ENCODE measurements at regions of chrX and their contacts with region 1.

Region 1: DNA sequence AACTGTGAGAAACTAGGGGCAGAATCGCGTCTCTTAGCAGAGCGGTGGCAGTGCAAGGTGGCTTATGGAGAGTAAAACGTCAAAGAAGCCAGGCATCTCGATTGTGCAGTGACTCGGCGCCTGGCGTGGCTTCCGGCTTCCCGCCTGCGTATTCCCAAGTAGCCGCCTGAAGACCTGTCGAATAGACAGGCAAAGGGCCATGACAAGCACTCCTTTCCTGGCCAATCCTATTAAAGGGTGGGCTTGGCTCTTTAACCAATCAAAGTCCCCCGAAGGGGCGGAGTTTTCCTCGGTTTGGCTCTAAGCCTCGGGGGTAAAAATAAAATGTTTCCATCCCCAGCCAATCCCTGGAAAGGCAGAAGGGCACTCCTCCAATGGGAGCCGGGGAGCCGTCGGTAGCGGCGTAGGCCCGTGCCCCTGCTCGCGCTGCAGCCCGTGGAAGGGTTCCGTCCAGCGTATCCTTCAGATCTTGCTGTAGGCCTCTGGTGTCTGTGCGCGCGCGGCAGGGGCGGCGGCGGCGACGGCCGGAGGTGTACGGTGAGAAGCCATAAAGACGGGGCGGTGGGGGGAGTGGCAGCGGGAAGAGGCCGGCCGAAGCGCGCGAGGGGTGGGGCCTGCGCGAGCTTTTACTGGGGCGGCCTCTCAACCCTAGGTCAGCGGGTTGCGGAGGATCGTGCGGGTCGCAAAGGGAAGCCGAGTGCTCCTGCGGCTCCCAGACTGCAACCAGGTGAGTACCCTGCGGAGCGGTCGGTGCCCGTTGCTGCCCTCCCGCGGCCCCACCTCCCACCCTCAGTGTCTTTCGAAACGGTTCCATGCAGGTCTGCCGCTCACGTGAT is at the start of gene KANTR:
- H3K4me3 Mint-ChIP-seq: peak within 1 kb of the TSS; percentile 91
- H3K27ac Mint-ChIP-seq: peak within 1 kb of the TSS; percentile 94
- H3K4me1 Mint-ChIP-seq: peaks cover 10% of the 10 kb centered on the region
- H3K27me3 Mint-ChIP-seq: peaks cover under 1% of the 10 kb centered on the region

Region 2: GRCh38 chrX:52934707-52935469 is 159.1 kb before region 1 on chrX:
- intact Hi-C with region 1: no loop called
- H3K4me3 Mint-ChIP-seq: peak overlapping the region; percentile 95
- H3K27ac Mint-ChIP-seq: peak overlapping the region; percentile 99
- H3K4me1 Mint-ChIP-seq: peaks cover 5% of the 10 kb centered on the region
- H3K27me3 Mint-ChIP-seq: no peaks in the 10 kb centered on the region

Region 3: DNA sequence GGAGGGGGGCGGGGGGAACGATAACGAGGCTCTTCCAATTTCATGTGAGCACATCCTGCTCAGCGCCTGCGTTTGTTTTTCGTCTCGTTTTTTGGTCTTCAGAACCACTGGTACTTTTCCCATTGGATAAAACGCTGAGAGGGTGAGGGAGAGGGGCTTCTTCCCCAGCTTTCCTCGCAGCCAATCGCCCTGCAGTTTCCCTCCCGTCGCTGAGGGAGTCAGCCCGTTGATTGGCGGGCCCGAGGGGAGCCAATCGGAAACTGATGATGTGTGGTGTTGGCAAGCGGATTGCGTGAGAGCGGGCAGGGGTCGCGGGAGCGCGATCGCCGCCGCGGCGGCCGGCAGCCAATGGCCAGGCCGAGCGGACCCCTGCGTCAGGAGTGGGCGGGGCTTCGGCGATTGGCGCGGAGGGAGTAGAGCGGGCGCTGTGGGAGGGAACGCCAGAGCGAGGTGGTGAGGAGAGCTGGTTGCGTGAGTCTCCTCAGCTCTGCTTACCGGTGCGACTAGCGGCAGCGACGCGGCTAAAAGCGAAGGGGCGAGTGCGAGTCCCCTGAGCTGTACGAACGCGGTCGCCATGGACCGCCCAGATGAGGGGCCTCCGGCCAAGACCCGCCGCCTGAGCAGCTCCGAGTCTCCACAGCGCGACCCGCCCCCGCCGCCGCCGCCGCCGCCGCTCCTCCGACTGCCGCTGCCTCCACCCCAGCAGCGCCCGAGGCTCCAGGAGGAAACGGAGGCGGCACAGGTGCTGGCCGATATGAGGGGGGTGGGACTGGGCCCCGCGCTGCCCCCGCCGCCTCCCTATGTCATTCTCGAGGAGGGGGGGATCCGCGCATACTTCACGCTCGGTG is 11.8 kb before region 1 on chrX and contains the start of gene TSPYL2:
- intact Hi-C with region 1: loop called (anchors 1 kb)
- H3K4me3 Mint-ChIP-seq: peak within 1 kb of the TSS; percentile 88
- H3K27ac Mint-ChIP-seq: peak within 1 kb of the TSS; percentile 94
- H3K4me1 Mint-ChIP-seq: peaks cover 13% of the 10 kb centered on the region
- H3K27me3 Mint-ChIP-seq: peaks cover 11% of the 10 kb centered on the region

Measured in dendritic cell treated with granulocyte-macrophage colony-stimulating factor and Interleukin-4, amounts not matched to agents 40 ng/mL and 50 ng/mL, for 4 days (primary cell).